ENCODE measurements at regions of chr13 and their contacts with region 1.

Region 1: GRCh38 chr13:102580552-102581169 is 16.1 kb upstream of the TPP2 start:
- DNase-seq: no peak
- H3K4me3 ChIP-seq: no peak overlapping the region
- H3K27ac ChIP-seq: no peak overlapping the region
- H3K4me1 ChIP-seq: no peaks in the 10 kb centered on the region
- H3K27me3 ChIP-seq: no peaks in the 10 kb centered on the region; a peak in 1 of 7 replicates
- CTCF ChIP-seq: peak in 2 of 3 experiments; percentile 60 to 74; a peak in 3 of 4 replicates
- EP300 ChIP-seq: no peak
- POLR2A ChIP-seq: no peak
- RAD21 ChIP-seq: peak; percentile 80 to 84

Region 2: GRCh38 chr13:102596147-102597028 is 15.7 kb after region 1 on chr13 and contains the start of gene TPP2:
- CTCF ChIA-PET with region 1: interaction called, 36 read pairs
- POLR2A ChIA-PET with region 1: interaction called, 4 read pairs
- DNase-seq: peak; percentile 92 to 99
- H3K4me3 ChIP-seq: peak within 1 kb of the TSS; percentile 85 to 92 (median 88)
- H3K27ac ChIP-seq: peak within 1 kb of the TSS; percentile 97
- H3K4me1 ChIP-seq: peaks cover 4 to 9% (median 7%) of the 10 kb centered on the region in 4 experiments; a peak in 6 of 7 replicates
- H3K27me3 ChIP-seq: no peaks in the 10 kb centered on the region
- CTCF ChIP-seq: no peak
- EP300 ChIP-seq: 0 out of 3 replicates have a peak, but pooled peaks of 1 of the 2 experiments have one; percentile 3
- POLR2A ChIP-seq: peak; percentile 82 to 93
- RAD21 ChIP-seq: no peak
- total RNA-seq, gene TPP2: 80.4 and 85.7 TPM in 2 replicates

Region 3: DNA sequence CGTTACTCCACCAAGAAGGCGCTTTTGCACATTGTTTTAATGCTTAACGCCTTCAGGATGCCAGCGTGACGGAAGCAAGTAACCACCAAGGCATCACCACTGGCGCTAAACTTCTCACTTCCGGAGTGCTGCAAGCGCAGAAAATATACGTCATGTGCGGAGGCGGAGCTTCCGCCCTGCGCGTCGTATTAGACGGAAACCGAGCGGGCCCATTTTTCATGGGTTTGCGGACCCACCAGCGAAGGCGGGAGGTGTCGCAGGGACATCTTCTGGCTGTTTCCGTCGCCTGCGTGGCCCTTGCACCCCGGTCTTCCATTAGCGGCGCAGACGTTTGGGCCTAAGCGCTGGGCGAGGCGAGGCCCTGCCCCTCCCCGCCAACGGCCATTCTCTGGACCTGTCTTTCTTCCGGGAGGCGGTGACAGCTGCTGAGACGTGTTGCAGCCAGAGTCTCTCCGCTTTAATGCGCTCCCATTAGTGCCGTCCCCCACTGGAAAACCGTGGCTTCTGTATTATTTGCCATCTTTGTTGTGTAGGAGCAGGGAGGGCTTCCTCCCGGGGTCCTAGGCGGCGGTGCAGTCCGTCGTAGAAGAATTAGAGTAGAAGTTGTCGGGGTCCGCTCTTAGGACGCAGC is 265.1 kb after region 1 on chr13 and contains the start of gene ERCC5:
- CTCF ChIA-PET with region 1: interaction called, 17 read pairs
- POLR2A ChIA-PET with region 1: no interaction called
- DNase-seq: peak; percentile 75 to 96
- H3K4me3 ChIP-seq: peak within 1 kb of the TSS; percentile 64 to 95 (median 90)
- H3K27ac ChIP-seq: peak within 1 kb of the TSS; percentile 87
- H3K4me1 ChIP-seq: peaks cover 0 to 2% (median 0%) of the 10 kb centered on the region in 4 experiments; a peak in 1 of 7 replicates
- H3K27me3 ChIP-seq: no peaks in the 10 kb centered on the region
- CTCF ChIP-seq: peak in 1 of 3 experiments; percentile 1; a peak in 1 of 4 replicates
- EP300 ChIP-seq: peak in 1 of 2 experiments; percentile 66; a peak in 1 of 3 replicates
- POLR2A ChIP-seq: peak; percentile 75 to 92
- RAD21 ChIP-seq: peak in 1 of 2 experiments; percentile 28; a peak in 2 of 4 replicates
- total RNA-seq, gene ERCC5: 24.4 and 28.3 TPM in 2 replicates